ENCODE measurements at regions of chr1 and their contacts with region 1.

Region 1: GRCh38 chr1:31923901-31924535 is 14.2 kb downstream of the PTP4A2 start:
- DNase-seq: peak in 1 of 4 experiments; percentile 21
- ATAC-seq: no peak
- H3K4me3 ChIP-seq: no peak overlapping the region
- H3K27ac ChIP-seq: no peak overlapping the region
- H3K4me1 ChIP-seq: peaks cover 37 to 51% of the 10 kb centered on the region in 2 experiments
- H3K27me3 ChIP-seq: no peaks in the 10 kb centered on the region
- CTCF ChIP-seq: no peak
- EP300 ChIP-seq: no peak
- POLR2A ChIP-seq: no peak
- RAD21 ChIP-seq: no peak

Region 2: DNA sequence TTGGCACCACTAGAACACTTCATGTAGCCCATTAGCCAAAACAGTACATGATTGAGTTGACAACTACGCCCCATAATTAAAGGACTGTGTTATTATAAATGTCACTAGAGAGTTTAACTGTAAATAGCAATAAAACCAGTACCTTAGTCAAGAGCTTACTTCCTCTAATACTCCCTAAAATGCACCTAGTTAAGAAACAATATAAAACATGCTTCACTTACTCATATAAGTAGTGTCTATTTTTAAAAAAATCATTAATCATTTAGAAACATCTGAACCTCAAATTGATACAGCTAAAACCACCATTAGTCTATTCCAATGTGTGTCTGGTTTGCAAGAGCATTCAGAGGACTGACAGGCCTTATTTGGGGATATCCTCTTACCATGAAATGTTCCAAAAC is 11.2 kb before region 1 on chr1:
- CTCF ChIA-PET with region 1: no interaction called
- POLR2A ChIA-PET with region 1: interaction called, 12 read pairs
- in situ Hi-C with region 1: no loop called
- intact Hi-C with region 1: no loop called
- DNase-seq: no peak
- ATAC-seq: no peak
- H3K4me3 ChIP-seq: no peak overlapping the region
- H3K27ac ChIP-seq: no peak overlapping the region
- H3K4me1 ChIP-seq: peaks cover 3 to 6% of the 10 kb centered on the region in 2 experiments; a peak in 2 of 5 replicates
- H3K27me3 ChIP-seq: no peaks in the 10 kb centered on the region; a peak in 1 of 5 replicates
- CTCF ChIP-seq: no peak
- EP300 ChIP-seq: no peak
- POLR2A ChIP-seq: no peak
- RAD21 ChIP-seq: no peak

Region 3: GRCh38 chr1:31938174-31938950 is 14.3 kb after region 1 on chr1 and contains the start of gene PTP4A2:
- CTCF ChIA-PET with region 1: no interaction called
- POLR2A ChIA-PET with region 1: interaction called, 50 read pairs
- in situ Hi-C with region 1: no loop called
- intact Hi-C with region 1: no loop called
- DNase-seq: peak; percentile 97 to 100 (median 98)
- ATAC-seq: peak; percentile 77
- H3K4me3 ChIP-seq: peak within 1 kb of the TSS; percentile 82
- H3K27ac ChIP-seq: peak within 1 kb of the TSS; percentile 94
- H3K4me1 ChIP-seq: peaks cover 46 to 53% of the 10 kb centered on the region in 2 experiments
- H3K27me3 ChIP-seq: no peaks in the 10 kb centered on the region
- CTCF ChIP-seq: peak in 2 of 3 experiments; percentile 79 to 82; a peak in 5 of 6 replicates
- EP300 ChIP-seq: peak; percentile 72; the same call in 1 of the 2 replicates
- POLR2A ChIP-seq: peak; percentile 71
- RAD21 ChIP-seq: peak in 1 of 2 experiments; percentile 37; a peak in 2 of 4 replicates
- polyA plus RNA-seq, gene PTP4A2: 197 to 480 TPM

Region 4: DNA sequence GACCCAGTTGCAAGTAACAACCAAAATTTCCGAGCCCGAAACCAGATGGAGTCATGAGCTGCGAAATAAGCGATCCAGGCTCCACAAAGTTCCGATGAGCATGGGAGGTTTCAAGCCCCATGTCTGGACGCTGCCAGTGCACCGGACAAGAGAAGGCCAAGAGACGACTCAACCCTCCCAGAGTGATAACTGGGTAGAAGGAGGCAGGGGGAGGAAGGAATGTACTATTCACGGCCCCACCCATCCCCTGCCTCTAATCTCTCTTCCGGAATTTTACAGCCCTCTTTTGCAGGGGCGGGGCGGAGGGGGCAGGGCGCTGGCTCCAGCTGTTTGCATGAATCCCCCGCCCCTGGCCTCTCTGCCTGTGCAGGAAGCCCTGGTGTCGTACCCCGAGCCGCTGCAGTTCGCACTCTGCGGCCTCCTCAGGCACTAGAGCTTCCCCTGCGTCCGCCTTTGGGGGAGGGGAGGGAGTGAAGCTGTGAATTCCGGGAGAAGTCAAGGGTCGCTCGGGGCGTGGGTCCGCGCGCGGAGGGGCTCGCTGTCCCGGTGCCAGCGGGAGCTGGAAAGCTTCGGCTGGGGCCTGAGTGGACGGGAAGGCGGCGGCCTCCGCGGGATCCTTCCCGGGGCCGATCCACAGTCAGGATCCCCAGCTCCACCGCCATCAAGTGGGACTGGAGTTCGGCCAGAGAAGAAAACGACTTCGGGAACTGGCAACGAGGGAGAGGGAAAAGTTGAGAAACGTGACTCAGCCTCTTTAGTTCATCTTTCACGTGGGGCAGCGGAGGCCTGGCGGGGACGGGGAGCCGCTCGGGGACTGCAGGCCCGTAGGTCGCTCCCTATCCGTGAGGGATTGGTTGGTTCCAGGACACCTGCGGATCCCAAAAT is 20.4 kb after region 1 on chr1:
- CTCF ChIA-PET with region 1: no interaction called
- POLR2A ChIA-PET with region 1: interaction called, 17 read pairs
- in situ Hi-C with region 1: no loop called
- intact Hi-C with region 1: no loop called
- DNase-seq: peak; percentile 94 to 100 (median 96)
- ATAC-seq: peak; percentile 91
- H3K4me3 ChIP-seq: peak overlapping the region; percentile 53
- H3K27ac ChIP-seq: peak overlapping the region; percentile 99
- H3K4me1 ChIP-seq: peaks cover 41 to 43% of the 10 kb centered on the region in 2 experiments
- H3K27me3 ChIP-seq: no peaks in the 10 kb centered on the region
- CTCF ChIP-seq: no peak
- EP300 ChIP-seq: peak; percentile 85
- POLR2A ChIP-seq: peak; percentile 96
- RAD21 ChIP-seq: peak; percentile 28 to 46; a peak in 3 of 4 replicates

Region 5: GRCh38 chr1:32005522-32005921 is 81.5 kb after region 1 on chr1:
- CTCF ChIA-PET with region 1: no interaction called
- POLR2A ChIA-PET with region 1: no interaction called
- in situ Hi-C with region 1: no loop called
- intact Hi-C with region 1: no loop called
- DNase-seq: no peak
- ATAC-seq: no peak
- H3K4me3 ChIP-seq: no peak overlapping the region
- H3K27ac ChIP-seq: no peak overlapping the region
- H3K4me1 ChIP-seq: peaks cover 16 to 23% of the 10 kb centered on the region in 2 experiments; a peak in 4 of 5 replicates
- H3K27me3 ChIP-seq: no peaks in the 10 kb centered on the region
- CTCF ChIP-seq: no peak
- EP300 ChIP-seq: no peak
- POLR2A ChIP-seq: no peak
- RAD21 ChIP-seq: no peak

Measured in K562 (cell line).